ENCODE measurements at regions of chr11 and their contacts with region 1.

Region 1: GRCh38 chr11:129639300-129639699 is 176.3 kb upstream of the TMEM45B start:
- DNase-seq: peak; percentile 76
- H3K4me3 Mint-ChIP-seq: no peak overlapping the region
- H3K27ac Mint-ChIP-seq: peak overlapping the region; percentile 98
- H3K4me1 Mint-ChIP-seq: peaks cover 74% of the 10 kb centered on the region
- H3K27me3 Mint-ChIP-seq: peaks cover 3% of the 10 kb centered on the region

Region 2: GRCh38 chr11:128052912-128053641 is 1586.2 kb before region 1 on chr11:
- CTCF ChIA-PET with region 1: no interaction called
- intact Hi-C with region 1: loop called (anchors 2 kb)
- DNase-seq: no peak
- H3K4me3 Mint-ChIP-seq: peak overlapping the region; percentile 49
- H3K27ac Mint-ChIP-seq: peak overlapping the region; percentile 86
- H3K4me1 Mint-ChIP-seq: peaks cover 67% of the 10 kb centered on the region
- H3K27me3 Mint-ChIP-seq: no peaks in the 10 kb centered on the region

Region 3: DNA sequence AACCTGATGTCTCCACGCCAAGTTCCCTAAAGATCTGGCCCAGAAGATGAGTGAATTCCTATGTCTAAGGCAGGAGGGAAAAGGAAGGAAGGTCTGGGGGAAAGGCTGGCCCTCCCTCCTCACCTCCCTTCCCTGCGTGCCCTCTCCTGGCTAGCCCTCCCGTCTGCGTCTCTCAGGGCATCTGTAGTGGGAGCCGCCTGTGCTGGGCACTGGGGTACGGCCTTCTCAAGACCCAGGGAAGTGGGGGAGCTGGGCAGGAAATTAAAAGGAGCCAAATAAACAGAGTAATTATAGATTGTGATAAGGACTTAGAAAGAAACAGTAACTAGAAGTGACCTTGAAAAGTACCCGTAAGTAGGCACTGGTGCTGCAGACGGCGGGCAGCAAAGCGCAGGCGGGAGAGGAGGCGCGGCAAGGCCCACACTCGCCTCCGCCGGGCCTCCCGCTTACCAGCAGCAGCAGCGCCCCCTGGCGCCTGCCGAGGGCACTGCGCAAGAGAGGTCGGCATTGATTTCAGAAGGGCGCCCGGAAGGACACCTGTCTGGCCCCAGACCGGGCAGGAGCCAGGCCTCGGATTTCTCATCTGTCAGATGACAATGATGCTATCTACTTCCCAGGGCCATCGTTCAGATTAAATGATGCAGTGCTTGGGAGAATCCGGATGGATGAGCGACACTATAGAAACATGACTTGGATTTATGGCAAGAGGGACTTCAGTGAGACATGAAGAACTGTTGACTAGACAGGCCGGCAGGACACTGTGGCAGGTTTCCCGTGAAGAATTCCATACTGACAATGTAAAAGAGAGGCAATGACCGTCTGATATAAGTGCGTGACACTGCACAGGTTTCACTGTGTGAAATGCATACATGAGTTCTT is 779.5 kb before region 1 on chr11:
- CTCF ChIA-PET with region 1: no interaction called
- intact Hi-C with region 1: loop called (anchors 10 kb)
- DNase-seq: peak; percentile 85
- H3K4me3 Mint-ChIP-seq: no peak overlapping the region
- H3K27ac Mint-ChIP-seq: no peak overlapping the region
- H3K4me1 Mint-ChIP-seq: peaks cover 3% of the 10 kb centered on the region
- H3K27me3 Mint-ChIP-seq: no peaks in the 10 kb centered on the region

Region 4: GRCh38 chr11:129041611-129042018 is 597.7 kb before region 1 on chr11:
- CTCF ChIA-PET with region 1: no interaction called
- intact Hi-C with region 1: no loop called
- DNase-seq: no peak
- H3K4me3 Mint-ChIP-seq: no peak overlapping the region
- H3K27ac Mint-ChIP-seq: no peak overlapping the region
- H3K4me1 Mint-ChIP-seq: no peaks in the 10 kb centered on the region
- H3K27me3 Mint-ChIP-seq: no peaks in the 10 kb centered on the region

Region 5: GRCh38 chr11:129237880-129238638 is 401.2 kb before region 1 on chr11:
- CTCF ChIA-PET with region 1: no interaction called
- intact Hi-C with region 1: no loop called
- DNase-seq: no peak
- H3K4me3 Mint-ChIP-seq: no peak overlapping the region
- H3K27ac Mint-ChIP-seq: no peak overlapping the region
- H3K4me1 Mint-ChIP-seq: no peaks in the 10 kb centered on the region
- H3K27me3 Mint-ChIP-seq: no peaks in the 10 kb centered on the region

Region 6: GRCh38 chr11:129300099-129300498 is 339.2 kb before region 1 on chr11:
- CTCF ChIA-PET with region 1: no interaction called
- intact Hi-C with region 1: loop called (anchors 1 kb)
- DNase-seq: peak; percentile 19
- H3K4me3 Mint-ChIP-seq: no peak overlapping the region
- H3K27ac Mint-ChIP-seq: no peak overlapping the region
- H3K4me1 Mint-ChIP-seq: peaks cover 14% of the 10 kb centered on the region
- H3K27me3 Mint-ChIP-seq: peaks cover 24% of the 10 kb centered on the region

Region 7: DNA sequence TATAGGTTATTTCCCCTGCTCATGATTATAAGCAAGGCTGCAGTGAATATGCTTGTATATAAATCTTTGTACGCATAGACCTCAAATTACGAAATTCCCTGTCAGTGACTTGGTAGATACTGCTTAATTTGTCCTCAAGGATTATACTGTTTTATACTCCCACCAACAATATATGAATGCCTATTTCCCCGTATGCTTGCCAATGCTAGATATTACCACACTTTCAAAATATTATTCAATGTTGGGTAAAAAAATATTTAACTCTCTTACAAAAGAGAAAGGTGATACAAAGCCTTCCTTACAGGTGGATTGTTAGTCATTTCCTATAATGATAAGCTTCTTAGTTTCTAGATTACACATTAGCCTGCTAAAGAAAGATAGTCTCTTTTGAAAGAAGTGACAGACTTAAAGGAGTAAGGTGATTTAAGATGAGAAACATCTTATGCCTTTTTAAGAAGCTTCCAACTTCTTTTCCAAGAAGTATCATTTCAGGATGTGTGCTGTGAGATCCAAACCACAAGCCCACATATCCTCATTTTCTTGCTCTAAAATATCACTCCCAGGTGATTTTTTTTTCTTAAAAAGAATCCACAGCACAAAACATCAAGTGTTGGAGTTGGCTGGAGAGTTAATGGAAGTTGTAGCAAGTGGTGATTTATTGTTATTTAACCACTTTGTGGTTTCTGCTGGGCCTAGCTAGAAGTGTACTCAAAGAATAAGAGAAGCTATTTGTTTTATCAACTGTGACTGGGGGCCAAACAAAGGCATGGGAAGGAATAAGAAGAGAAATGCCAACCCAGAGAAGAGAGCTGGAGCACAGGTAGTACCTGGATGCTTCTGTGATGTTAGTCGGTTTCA is 204.4 kb before region 1 on chr11:
- CTCF ChIA-PET with region 1: interaction called, 3 read pairs
- intact Hi-C with region 1: loop called (anchors 1 kb)
- DNase-seq: no peak
- H3K4me3 Mint-ChIP-seq: no peak overlapping the region
- H3K27ac Mint-ChIP-seq: peak overlapping the region; percentile 70
- H3K4me1 Mint-ChIP-seq: peaks cover 28% of the 10 kb centered on the region
- H3K27me3 Mint-ChIP-seq: peaks cover 42% of the 10 kb centered on the region

Region 8: GRCh38 chr11:129695575-129696308 is 56.4 kb after region 1 on chr11:
- CTCF ChIA-PET with region 1: interaction called, 5 read pairs
- intact Hi-C with region 1: loop called (anchors 1 kb)
- DNase-seq: peak; percentile 80
- H3K4me3 Mint-ChIP-seq: peak overlapping the region; percentile 71
- H3K27ac Mint-ChIP-seq: peak overlapping the region; percentile 44
- H3K4me1 Mint-ChIP-seq: peaks cover 12% of the 10 kb centered on the region
- H3K27me3 Mint-ChIP-seq: no peaks in the 10 kb centered on the region

Region 9: GRCh38 chr11:130118636-130119387 is 479.5 kb after region 1 on chr11:
- CTCF ChIA-PET with region 1: no interaction called
- intact Hi-C with region 1: loop called (anchors 1 kb)
- DNase-seq: peak; percentile 35
- H3K4me3 Mint-ChIP-seq: no peak overlapping the region
- H3K27ac Mint-ChIP-seq: no peak overlapping the region
- H3K4me1 Mint-ChIP-seq: peaks cover 46% of the 10 kb centered on the region
- H3K27me3 Mint-ChIP-seq: peaks cover 7% of the 10 kb centered on the region